ENCODE measurements at regions of chr22 and their contacts with region 1.

Region 1: GRCh38 chr22:38700270-38700788 is 414 bp downstream of the JOSD1 start:
- DNase-seq: no peak
- ATAC-seq: peak; percentile 32
- H3K4me3 ChIP-seq: peak overlapping the region; percentile 86
- H3K27ac ChIP-seq: peak overlapping the region; percentile 89
- H3K4me1 ChIP-seq: peaks cover 12% of the 10 kb centered on the region
- H3K27me3 ChIP-seq: no peaks in the 10 kb centered on the region
- CTCF ChIP-seq: no peak
- EP300 ChIP-seq: no peak
- POLR2A ChIP-seq: no peak
- RAD21 ChIP-seq: no peak

Region 2: GRCh38 chr22:38656256-38657044 is 43.9 kb before region 1 on chr22 and contains the starts of genes CBY1 and FAM227A:
- CTCF ChIA-PET with region 1: no interaction called
- POLR2A ChIA-PET with region 1: interaction called, 5 read pairs
- RAD21 ChIA-PET with region 1: no interaction called
- SMC1A ChIA-PET with region 1: interaction called, 11 read pairs
- in situ Hi-C with region 1: no loop called
- intact Hi-C with region 1: no loop called
- DNase-seq: peak; percentile 41
- ATAC-seq: peak; percentile 90
- H3K4me3 ChIP-seq: peak within 1 kb of the TSS; percentile 86
- H3K27ac ChIP-seq: peak within 1 kb of the TSS; percentile 99
- H3K4me1 ChIP-seq: peaks cover 5% of the 10 kb centered on the region
- H3K27me3 ChIP-seq: no peaks in the 10 kb centered on the region
- CTCF ChIP-seq: no peak
- EP300 ChIP-seq: no peak
- POLR2A ChIP-seq: peak; percentile 80
- RAD21 ChIP-seq: no peak
- polyA plus RNA-seq, gene CBY1: 12.4 to 14.5 TPM
- polyA plus RNA-seq, gene FAM227A: 0.02 to 0.11 TPM

Region 3: GRCh38 chr22:38907767-38908166 is 207.4 kb after region 1 on chr22:
- CTCF ChIA-PET with region 1: no interaction called
- POLR2A ChIA-PET with region 1: no interaction called
- RAD21 ChIA-PET with region 1: no interaction called
- SMC1A ChIA-PET with region 1: no interaction called
- in situ Hi-C with region 1: no loop called
- intact Hi-C with region 1: no loop called
- DNase-seq: no peak
- ATAC-seq: no peak
- H3K4me3 ChIP-seq: no peak overlapping the region
- H3K27ac ChIP-seq: no peak overlapping the region
- H3K4me1 ChIP-seq: no peaks in the 10 kb centered on the region
- H3K27me3 ChIP-seq: peaks cover 0 to 3% of the 10 kb centered on the region in 2 experiments; a peak in 1 of 4 replicates
- CTCF ChIP-seq: no peak
- EP300 ChIP-seq: no peak
- POLR2A ChIP-seq: no peak
- RAD21 ChIP-seq: no peak

Measured in GM12878 (cell line).